B cell (primary cell): ENCODE measurements at regions of chr20 and their contacts with region 1.

Region 1: GRCh38 chr20:64119681-64120341 is 12.4 kb upstream of the NPBWR2 start:
- DNase-seq: no peak
- ATAC-seq: no peak
- H3K4me3 ChIP-seq: peak overlapping the region in 4 of 5 experiments; percentile 14 to 50 (median 40)
- H3K4me3 Mint-ChIP-seq: peak overlapping the region; percentile 77
- H3K27ac ChIP-seq: no peak overlapping the region
- H3K27ac Mint-ChIP-seq: peak overlapping the region; percentile 84
- H3K4me1 ChIP-seq: peaks cover 4 to 11% of the 10 kb centered on the region in 2 donors
- H3K4me1 Mint-ChIP-seq: peaks cover 8% of the 10 kb centered on the region
- H3K27me3 ChIP-seq: peaks cover 0 to 10% (median 0%) of the 10 kb centered on the region in 4 experiments
- H3K27me3 Mint-ChIP-seq: peaks cover 3% of the 10 kb centered on the region
- CTCF ChIP-seq: no peak

Region 2: DNA sequence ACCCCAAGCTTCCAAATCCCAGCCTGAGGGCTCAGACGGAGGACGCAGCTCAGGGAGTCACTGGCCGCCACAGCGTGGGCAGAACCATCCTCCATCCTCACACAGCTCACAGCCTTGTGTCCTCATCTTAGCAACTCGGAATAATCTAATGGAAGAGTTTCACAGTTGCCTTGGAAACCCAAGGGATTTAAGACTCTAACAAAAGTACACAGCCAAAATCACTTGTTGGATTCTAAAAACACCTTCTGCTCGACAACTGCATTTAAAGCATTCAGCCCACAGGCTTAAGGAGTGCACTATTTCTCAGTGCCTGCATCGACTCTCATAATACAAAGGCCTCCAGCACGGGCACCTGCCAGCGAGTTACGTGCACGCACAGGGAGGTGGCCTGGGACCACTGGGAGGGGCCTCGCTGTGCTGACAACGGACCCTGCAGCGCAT is 334.1 kb before region 1 on chr20:
- CTCF ChIA-PET with region 1: no interaction called
- POLR2A ChIA-PET with region 1: no interaction called
- intact Hi-C with region 1: loop called (anchors 5 kb)
- DNase-seq: no peak
- ATAC-seq: no peak
- H3K4me3 ChIP-seq: no peak overlapping the region
- H3K4me3 Mint-ChIP-seq: no peak overlapping the region
- H3K27ac ChIP-seq: no peak overlapping the region
- H3K27ac Mint-ChIP-seq: no peak overlapping the region
- H3K4me1 ChIP-seq: no peaks in the 10 kb centered on the region
- H3K4me1 Mint-ChIP-seq: peaks cover 3% of the 10 kb centered on the region
- H3K27me3 ChIP-seq: no peaks in the 10 kb centered on the region
- H3K27me3 Mint-ChIP-seq: no peaks in the 10 kb centered on the region
- CTCF ChIP-seq: no peak

Region 3: DNA sequence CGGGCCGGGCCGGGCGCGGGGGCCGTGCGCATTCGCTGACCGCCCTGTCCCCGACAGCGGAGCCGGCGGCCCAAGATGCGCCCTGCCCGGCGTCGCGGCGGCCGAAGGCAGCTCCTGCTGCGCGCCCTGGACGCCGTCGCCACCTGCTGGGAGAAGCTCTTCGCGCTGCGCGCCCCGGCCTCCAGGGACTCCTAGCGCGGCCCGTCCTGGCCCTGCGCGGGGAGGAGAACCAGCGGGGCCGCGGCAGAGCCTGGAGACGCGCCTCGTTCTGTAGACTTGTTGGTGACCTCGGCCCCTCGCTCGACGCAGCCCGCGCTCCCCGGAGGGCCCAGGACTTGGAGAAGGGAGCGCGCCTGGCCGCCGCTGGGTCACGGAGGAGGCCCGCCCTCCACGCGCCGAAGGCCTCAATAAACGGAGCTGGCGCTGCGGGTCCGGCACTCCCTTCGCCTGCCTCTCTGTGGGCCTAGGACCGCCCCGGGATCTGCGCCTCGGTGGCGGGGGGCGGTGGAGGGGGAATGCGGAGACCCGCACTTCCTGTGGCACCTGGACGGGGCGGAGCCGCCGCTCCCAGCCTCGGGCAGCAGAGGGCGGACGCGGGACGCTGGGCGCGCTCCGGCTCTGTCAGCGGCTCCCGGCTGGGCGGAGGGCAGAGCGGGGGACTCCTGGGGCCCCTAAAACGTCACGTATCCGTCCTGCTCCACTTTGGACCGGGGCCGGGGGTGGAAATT is 81.1 kb before region 1 on chr20:
- CTCF ChIA-PET with region 1: interaction called, 108 read pairs
- POLR2A ChIA-PET with region 1: interaction called, 4 read pairs
- intact Hi-C with region 1: loop called (anchors 1 kb)
- DNase-seq: peak; percentile 84
- ATAC-seq: peak; percentile 86
- H3K4me3 ChIP-seq: peak overlapping the region in 4 of 5 experiments; percentile 64 to 85 (median 66)
- H3K4me3 Mint-ChIP-seq: peak overlapping the region; percentile 80
- H3K27ac ChIP-seq: peak overlapping the region in 1 of 2 donors; percentile 28
- H3K27ac Mint-ChIP-seq: peak overlapping the region; percentile 20
- H3K4me1 ChIP-seq: peaks cover 31 to 32% of the 10 kb centered on the region in 2 donors
- H3K4me1 Mint-ChIP-seq: peaks cover 23% of the 10 kb centered on the region
- H3K27me3 ChIP-seq: peaks cover 0 to 23% (median 11%) of the 10 kb centered on the region in 4 experiments
- H3K27me3 Mint-ChIP-seq: peaks cover 11% of the 10 kb centered on the region
- CTCF ChIP-seq: peak; percentile 79

Region 4: DNA sequence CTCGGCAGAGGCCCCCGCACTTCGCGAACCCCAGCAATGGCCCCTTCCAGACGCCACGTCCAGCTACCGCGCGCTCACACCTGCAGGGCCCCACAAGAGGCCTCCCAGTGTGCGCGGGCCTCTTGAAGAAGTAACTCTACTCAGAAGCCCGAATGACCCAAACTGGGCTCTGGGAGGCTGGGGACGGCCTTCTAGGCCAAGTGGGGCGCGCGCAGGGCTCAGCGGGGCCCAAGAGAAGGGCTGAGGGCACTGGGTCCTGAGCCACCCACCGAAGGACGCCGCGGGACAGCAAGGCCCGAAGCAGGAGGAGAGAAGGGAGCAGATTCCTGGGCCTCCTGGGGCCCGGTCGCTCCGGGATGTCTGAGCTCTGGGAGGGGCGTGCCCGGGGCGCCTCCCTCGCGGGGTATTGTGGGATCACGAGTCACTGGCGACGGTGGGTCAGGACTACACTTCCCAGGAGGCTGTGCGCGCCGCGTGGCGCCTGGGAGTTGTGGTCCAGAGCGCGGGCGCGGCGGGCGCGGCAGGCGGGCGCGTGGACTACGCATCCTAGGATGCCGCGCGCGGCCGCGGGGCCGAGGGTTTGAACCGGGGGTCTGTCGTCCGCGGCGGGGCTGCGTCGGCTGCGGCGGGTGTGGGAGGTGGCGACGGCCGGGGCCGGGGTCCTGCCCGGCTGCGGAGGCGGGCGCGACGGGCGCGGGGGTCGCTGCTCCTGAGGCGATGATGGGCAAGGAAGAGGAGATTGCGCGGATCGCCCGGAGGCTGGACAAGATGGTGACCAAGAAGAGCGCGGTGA is 57.0 kb before region 1 on chr20 and contains the start of gene TCEA2:
- CTCF ChIA-PET with region 1: interaction called, 13 read pairs
- POLR2A ChIA-PET with region 1: interaction called, 7 read pairs
- intact Hi-C with region 1: no loop called
- DNase-seq: peak; percentile 93
- ATAC-seq: peak; percentile 83
- H3K4me3 ChIP-seq: peak within 1 kb of the TSS in 4 of 5 experiments; percentile 63 to 79 (median 70)
- H3K4me3 Mint-ChIP-seq: peak within 1 kb of the TSS; percentile 88
- H3K27ac ChIP-seq: peak within 1 kb of the TSS; percentile 34 to 69
- H3K27ac Mint-ChIP-seq: peak within 1 kb of the TSS; percentile 86
- H3K4me1 ChIP-seq: peaks cover 54 to 63% of the 10 kb centered on the region in 2 donors
- H3K4me1 Mint-ChIP-seq: peaks cover 52% of the 10 kb centered on the region
- H3K27me3 ChIP-seq: no peaks in the 10 kb centered on the region
- H3K27me3 Mint-ChIP-seq: no peaks in the 10 kb centered on the region
- CTCF ChIP-seq: no peak
- total RNA-seq, gene TCEA2: 49.3 and 58.1 TPM in 2 replicates

Region 5: DNA sequence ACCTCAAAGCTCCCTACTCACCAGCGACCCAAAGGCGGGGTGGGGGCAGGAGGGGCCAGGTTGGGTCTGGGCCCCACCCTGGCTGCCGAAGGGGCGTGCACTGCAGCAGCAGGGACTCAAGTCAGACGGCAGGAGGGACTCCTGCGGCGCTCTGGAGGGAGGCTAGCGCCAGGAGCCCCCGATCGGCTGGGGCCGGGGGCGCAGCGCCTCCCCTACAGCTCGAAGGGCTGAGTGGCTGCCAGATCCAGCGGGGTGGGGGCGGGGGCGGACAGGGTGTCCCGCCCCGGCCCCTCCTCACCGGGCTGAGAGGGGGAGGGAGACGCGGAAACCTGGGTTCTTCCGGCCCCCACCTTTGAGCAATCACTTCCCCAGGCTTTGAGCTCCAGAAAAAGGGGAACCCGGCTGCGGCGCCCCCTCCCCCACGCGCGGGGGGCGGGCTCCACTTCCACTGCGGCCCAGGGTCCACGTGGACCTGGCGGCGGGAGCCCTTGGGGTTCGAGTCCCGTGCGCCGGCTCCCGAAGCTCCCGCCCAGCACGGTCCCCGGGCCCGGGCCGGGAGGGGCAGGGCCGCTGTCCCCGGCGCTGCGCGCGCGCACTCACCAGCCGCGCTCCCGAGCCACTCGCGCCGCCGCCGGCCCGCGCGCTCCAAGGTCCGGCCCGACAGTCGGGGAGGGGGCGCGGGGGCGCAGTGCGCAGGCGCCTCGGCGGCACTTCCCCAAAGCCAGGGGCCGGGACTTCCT is 40.4 kb before region 1 on chr20 and contains the start of gene RGS19:
- CTCF ChIA-PET with region 1: interaction called, 220 read pairs
- POLR2A ChIA-PET with region 1: interaction called, 12 read pairs
- intact Hi-C with region 1: loop called (anchors 1 kb)
- DNase-seq: peak; percentile 95
- ATAC-seq: peak; percentile 46
- H3K4me3 ChIP-seq: peak within 1 kb of the TSS; percentile 80 to 98 (median 96)
- H3K4me3 Mint-ChIP-seq: peak within 1 kb of the TSS; percentile 87
- H3K27ac ChIP-seq: peak within 1 kb of the TSS; percentile 77 to 94
- H3K27ac Mint-ChIP-seq: peak within 1 kb of the TSS; percentile 93
- H3K4me1 ChIP-seq: peaks cover 46 to 75% of the 10 kb centered on the region in 2 donors
- H3K4me1 Mint-ChIP-seq: peaks cover 57% of the 10 kb centered on the region
- H3K27me3 ChIP-seq: peaks cover 0 to 3% (median under 1%) of the 10 kb centered on the region in 4 experiments
- H3K27me3 Mint-ChIP-seq: no peaks in the 10 kb centered on the region
- CTCF ChIP-seq: no peak
- total RNA-seq, gene RGS19: 69.4 TPM in 2 replicates

Region 6: DNA sequence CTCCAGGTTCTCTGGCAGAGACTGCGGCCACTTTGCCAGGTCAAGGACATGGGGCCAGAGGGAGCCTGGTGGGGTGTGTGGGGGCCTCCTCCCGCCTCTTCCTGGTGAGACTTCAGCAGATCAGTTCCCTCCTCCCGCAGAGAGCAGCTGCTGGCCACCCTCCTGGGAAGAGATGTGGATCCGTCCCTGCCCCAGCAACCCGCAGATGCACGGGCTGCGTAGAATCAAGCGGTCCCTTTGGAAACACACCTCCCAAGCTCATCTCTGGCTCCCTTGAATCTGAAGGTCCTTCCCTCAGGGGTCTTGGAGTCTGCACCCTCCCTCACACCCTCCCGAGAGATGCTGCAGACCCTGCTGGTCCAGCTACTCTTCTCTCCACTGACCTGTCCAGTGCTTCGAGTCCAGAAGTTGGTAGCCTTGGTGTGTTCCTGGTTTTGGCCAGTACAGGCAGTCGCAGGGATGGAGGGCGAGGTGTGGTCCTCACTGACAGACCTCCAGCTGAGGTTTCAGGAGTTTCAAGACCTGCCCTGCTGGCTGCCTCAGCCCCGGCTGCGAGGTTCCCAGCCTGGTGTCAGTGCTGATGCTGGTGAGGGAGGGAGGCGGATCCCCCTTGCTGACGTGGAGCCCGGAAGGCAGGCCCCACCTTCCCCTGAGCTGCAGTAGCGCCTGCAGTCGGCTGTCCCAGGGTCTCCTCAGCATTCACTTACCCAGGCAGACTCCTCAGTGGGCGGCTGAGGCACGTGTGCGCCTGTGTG is 12.7 kb before region 1 on chr20 and contains the start of gene NPBWR2:
- CTCF ChIA-PET with region 1: interaction called, 50 read pairs
- POLR2A ChIA-PET with region 1: interaction called, 4 read pairs
- intact Hi-C with region 1: loop called (anchors 1 kb)
- DNase-seq: peak; percentile 64
- ATAC-seq: peak; percentile 70
- H3K4me3 ChIP-seq: peak within 1 kb of the TSS in 3 of 5 experiments; percentile 19 to 24 (median 21)
- H3K4me3 Mint-ChIP-seq: peak within 1 kb of the TSS; percentile 80
- H3K27ac ChIP-seq: peak within 1 kb of the TSS; percentile 66 to 78
- H3K27ac Mint-ChIP-seq: peak within 1 kb of the TSS; percentile 92
- H3K4me1 ChIP-seq: peaks cover 20 to 45% of the 10 kb centered on the region in 2 donors
- H3K4me1 Mint-ChIP-seq: peaks cover 36% of the 10 kb centered on the region
- H3K27me3 ChIP-seq: peaks cover 0 to 14% (median 0%) of the 10 kb centered on the region in 4 experiments
- H3K27me3 Mint-ChIP-seq: no peaks in the 10 kb centered on the region
- CTCF ChIP-seq: no peak
- total RNA-seq, gene NPBWR2: 0.22 TPM in 1 of 2 replicates, not detected in the other

Region 7: DNA sequence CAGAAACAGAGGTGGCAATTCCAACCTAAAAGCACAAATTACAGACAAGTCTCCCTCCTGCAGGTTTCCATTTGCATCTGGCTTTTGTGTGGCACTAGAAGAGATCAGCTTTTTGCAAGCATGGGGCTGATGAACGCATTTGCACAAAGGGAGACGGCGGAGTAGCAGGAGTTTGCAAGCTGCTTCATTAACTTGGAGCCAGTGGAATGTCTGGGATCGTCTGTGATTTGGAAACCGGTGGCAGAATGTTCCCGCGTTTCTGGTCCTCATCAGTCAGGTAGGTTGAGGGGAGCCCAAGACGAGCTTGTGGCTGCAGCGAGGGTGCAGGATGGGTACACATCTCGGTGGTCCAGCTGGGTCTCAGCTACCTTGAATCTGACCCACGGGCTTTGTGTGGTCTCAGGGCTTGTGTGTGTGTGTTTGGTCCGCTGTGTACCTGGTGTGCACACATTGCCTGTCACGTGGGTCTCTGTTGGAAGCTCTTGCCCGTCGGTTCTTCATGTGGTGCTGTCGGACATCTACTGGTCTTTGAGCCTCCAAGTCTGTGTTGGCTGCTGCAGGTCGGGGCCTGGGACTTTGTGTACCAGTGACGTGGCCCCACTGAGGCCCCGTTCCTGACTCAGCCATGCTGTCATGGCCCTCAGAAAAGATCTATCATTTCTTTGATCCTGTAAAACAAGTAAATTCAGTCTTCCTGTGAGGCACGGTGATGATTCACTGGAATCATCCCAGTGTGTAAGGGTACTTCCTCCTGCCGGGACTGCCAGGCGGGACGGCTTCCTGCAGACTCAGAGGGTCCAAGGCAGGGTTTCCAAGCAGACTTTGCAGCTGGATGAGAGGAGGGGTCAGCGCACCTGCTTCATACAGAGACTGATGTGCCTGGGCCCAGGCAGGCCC is 32.1 kb after region 1 on chr20:
- CTCF ChIA-PET with region 1: no interaction called
- POLR2A ChIA-PET with region 1: no interaction called
- intact Hi-C with region 1: no loop called
- DNase-seq: no peak
- ATAC-seq: no peak
- H3K4me3 ChIP-seq: no peak overlapping the region
- H3K4me3 Mint-ChIP-seq: no peak overlapping the region
- H3K27ac ChIP-seq: no peak overlapping the region
- H3K27ac Mint-ChIP-seq: no peak overlapping the region
- H3K4me1 ChIP-seq: no peaks in the 10 kb centered on the region
- H3K4me1 Mint-ChIP-seq: no peaks in the 10 kb centered on the region
- H3K27me3 ChIP-seq: peaks cover 0 to 1% (median 0%) of the 10 kb centered on the region in 4 experiments
- H3K27me3 Mint-ChIP-seq: peaks cover 5% of the 10 kb centered on the region
- CTCF ChIP-seq: no peak